ENCODE measurements at regions of chr2 and their contacts with region 1.

Region 1: DNA sequence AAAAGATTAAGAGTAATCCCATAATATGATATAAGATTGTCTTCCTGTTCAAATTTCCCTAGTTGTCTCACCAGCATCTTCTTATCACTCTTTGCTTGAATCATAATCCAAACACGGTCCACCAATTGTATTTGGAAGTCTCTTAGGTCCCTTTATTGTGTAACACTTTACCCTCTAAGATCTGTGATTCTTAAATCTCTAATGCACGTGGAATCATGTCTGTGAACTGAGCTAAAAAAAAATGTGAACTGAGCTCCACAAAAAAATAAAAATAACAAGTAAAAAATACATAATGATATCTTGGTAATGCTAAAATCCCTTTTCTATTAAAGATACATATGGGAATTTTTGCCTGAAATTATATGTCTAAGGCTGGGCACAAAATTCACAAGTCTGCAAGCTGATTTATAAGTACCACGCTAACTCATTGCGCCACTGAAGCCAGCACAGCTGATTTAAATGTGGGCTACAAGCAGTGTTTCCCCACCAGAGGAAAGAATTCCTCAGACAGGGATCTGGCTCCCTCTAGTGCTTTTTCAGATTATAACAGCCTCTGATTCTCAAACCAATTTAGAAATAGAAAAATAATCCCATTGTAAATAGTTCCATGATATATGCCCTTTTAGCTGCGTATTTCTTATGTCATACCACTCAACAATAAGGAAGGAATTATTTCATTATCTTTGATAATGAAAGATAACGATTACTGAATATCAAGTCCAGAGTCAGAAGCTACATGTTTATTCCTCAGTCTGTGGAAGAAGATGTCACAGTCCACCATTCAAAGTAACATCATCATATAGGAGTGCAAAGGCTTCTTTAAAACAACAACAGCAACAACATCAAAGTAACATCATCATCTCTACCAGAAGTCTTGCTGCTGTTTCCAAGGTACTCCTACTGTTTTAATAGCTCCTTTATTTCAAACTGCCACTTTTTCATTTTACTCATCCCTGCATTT is 22.9 kb downstream of the RBM43 start:
- DNase-seq: no peak
- H3K4me3 ChIP-seq: no peak overlapping the region
- H3K27ac ChIP-seq: no peak overlapping the region
- H3K4me1 ChIP-seq: no peaks in the 10 kb centered on the region
- H3K27me3 ChIP-seq: no peaks in the 10 kb centered on the region
- CTCF ChIP-seq: peak in 2 of 3 experiments; percentile 61 to 78; a peak in 3 of 4 replicates
- EP300 ChIP-seq: no peak
- POLR2A ChIP-seq: no peak
- RAD21 ChIP-seq: peak; percentile 99 to 100

Region 2: DNA sequence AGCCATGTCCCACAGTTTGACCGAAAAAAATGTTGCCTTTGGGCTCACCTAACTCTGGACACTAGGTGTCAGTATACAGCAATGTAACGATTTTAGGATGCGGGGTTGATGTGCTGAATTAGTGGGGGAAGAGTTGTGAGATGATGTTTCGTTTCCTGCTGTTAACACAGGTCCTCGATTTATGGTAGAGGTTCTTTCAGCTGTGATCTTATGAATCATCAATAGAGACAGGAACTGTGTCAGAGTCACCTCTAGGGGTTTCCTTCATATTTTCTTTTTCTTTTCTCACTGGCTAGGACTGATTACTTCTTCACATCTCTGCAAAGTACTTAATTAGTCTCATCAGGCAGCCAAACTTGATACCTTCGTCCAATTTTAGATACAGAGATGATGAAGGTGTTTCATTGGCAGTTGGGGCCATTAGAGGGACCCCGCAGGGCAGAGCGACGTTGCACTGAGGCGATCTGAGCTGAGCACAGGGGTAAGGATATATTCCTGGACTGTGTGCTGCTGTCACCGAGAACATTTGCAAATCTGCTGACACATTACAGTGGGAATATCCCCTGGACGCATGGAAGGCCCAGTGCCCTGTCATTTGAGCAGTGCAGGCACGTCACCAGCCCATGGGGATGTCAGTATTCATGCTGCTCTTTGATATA is 1641.0 kb before region 1 on chr2:
- CTCF ChIA-PET with region 1: interaction called, 24 read pairs
- POLR2A ChIA-PET with region 1: no interaction called
- DNase-seq: peak in 1 of 2 experiments; percentile 31
- H3K4me3 ChIP-seq: no peak overlapping the region
- H3K27ac ChIP-seq: no peak overlapping the region
- H3K4me1 ChIP-seq: no peaks in the 10 kb centered on the region
- H3K27me3 ChIP-seq: no peaks in the 10 kb centered on the region
- CTCF ChIP-seq: peak; percentile 5 to 90 (median 68)
- EP300 ChIP-seq: no peak
- POLR2A ChIP-seq: no peak
- RAD21 ChIP-seq: peak; percentile 97

Region 3: DNA sequence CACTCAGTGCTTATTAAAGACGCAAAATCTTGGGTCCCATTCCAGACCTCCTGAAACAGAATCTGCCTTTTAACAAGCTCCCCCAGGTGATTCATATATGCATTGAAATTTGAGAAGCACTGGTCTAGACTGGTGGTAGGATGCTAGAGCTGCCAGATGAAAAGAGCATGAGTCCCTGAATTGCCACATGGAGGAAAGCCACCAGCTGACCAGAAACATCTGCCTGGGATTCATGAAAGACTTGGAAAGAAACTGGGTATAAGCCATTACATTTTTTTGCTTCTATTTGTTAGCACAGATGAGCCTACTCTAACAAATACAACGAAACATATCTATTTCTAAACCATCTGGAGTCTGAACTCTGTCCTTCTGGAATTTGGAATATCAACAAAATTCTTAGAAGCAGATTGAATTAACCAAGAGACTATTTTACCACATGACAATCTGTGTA is 206.0 kb before region 1 on chr2:
- CTCF ChIA-PET with region 1: interaction called, 14 read pairs
- POLR2A ChIA-PET with region 1: no interaction called
- DNase-seq: no peak
- H3K4me3 ChIP-seq: no peak overlapping the region
- H3K27ac ChIP-seq: no peak overlapping the region
- H3K4me1 ChIP-seq: no peaks in the 10 kb centered on the region
- H3K27me3 ChIP-seq: no peaks in the 10 kb centered on the region
- CTCF ChIP-seq: no peak
- EP300 ChIP-seq: no peak
- POLR2A ChIP-seq: no peak
- RAD21 ChIP-seq: no peak

Region 4: GRCh38 chr2:151051574-151052220 is 187.1 kb before region 1 on chr2:
- CTCF ChIA-PET with region 1: interaction called, 11 read pairs
- POLR2A ChIA-PET with region 1: no interaction called
- DNase-seq: no peak
- H3K4me3 ChIP-seq: no peak overlapping the region
- H3K27ac ChIP-seq: no peak overlapping the region
- H3K4me1 ChIP-seq: no peaks in the 10 kb centered on the region
- H3K27me3 ChIP-seq: no peaks in the 10 kb centered on the region
- CTCF ChIP-seq: peak in 2 of 3 experiments; percentile 45 to 78; a peak in 2 of 4 replicates
- EP300 ChIP-seq: no peak
- POLR2A ChIP-seq: no peak
- RAD21 ChIP-seq: peak; percentile 70 to 78

Region 5: GRCh38 chr2:151176661-151177060 is 62.1 kb before region 1 on chr2:
- CTCF ChIA-PET with region 1: interaction called, 32 read pairs
- POLR2A ChIA-PET with region 1: no interaction called
- DNase-seq: no peak
- H3K4me3 ChIP-seq: no peak overlapping the region
- H3K27ac ChIP-seq: no peak overlapping the region
- H3K4me1 ChIP-seq: peaks cover 0 to 19% (median 10%) of the 10 kb centered on the region in 4 experiments; a peak in 5 of 7 replicates
- H3K27me3 ChIP-seq: 0 out of 7 replicates have a peak, but pooled peaks cover 0 to 2% (median 0%) of the 10 kb centered on the region in 4 experiments
- CTCF ChIP-seq: peak in 1 of 3 experiments; percentile 36; a peak in 1 of 4 replicates
- EP300 ChIP-seq: no peak
- POLR2A ChIP-seq: no peak
- RAD21 ChIP-seq: peak; percentile 48 to 56

Region 6: GRCh38 chr2:151191001-151191400 is 47.8 kb before region 1 on chr2:
- CTCF ChIA-PET with region 1: interaction called, 19 read pairs
- POLR2A ChIA-PET with region 1: no interaction called
- DNase-seq: no peak
- H3K4me3 ChIP-seq: no peak overlapping the region
- H3K27ac ChIP-seq: no peak overlapping the region
- H3K4me1 ChIP-seq: no peaks in the 10 kb centered on the region
- H3K27me3 ChIP-seq: no peaks in the 10 kb centered on the region
- CTCF ChIP-seq: no peak
- EP300 ChIP-seq: no peak
- POLR2A ChIP-seq: no peak
- RAD21 ChIP-seq: no peak

Region 7: GRCh38 chr2:151280271-151280670 is 41.5 kb after region 1 on chr2:
- CTCF ChIA-PET with region 1: no interaction called
- POLR2A ChIA-PET with region 1: no interaction called
- DNase-seq: no peak
- H3K4me3 ChIP-seq: no peak overlapping the region
- H3K27ac ChIP-seq: no peak overlapping the region
- H3K4me1 ChIP-seq: no peaks in the 10 kb centered on the region
- H3K27me3 ChIP-seq: no peaks in the 10 kb centered on the region
- CTCF ChIP-seq: no peak
- EP300 ChIP-seq: no peak
- POLR2A ChIP-seq: no peak
- RAD21 ChIP-seq: no peak

Region 8: DNA sequence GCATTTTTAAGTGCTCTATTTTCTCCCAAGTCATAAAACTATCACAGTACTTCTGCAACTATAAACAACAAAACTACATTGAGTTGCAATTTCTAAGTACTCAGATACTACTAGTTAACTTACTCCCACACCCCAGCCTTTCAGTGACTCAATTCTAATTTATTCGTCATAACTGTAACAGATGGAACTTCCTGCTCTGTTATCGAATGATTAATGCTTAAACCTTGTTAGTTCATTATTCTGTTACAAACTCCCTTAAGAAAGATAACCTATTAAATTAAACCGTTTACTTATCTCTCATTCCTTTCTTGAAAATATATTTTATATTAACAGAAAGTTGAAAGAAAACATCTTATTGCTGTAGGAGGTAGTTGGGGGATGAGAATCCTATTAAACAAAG is 135.6 kb after region 1 on chr2:
- CTCF ChIA-PET with region 1: no interaction called
- POLR2A ChIA-PET with region 1: no interaction called
- DNase-seq: no peak
- H3K4me3 ChIP-seq: no peak overlapping the region
- H3K27ac ChIP-seq: no peak overlapping the region
- H3K4me1 ChIP-seq: peaks cover 0 to 6% (median 0%) of the 10 kb centered on the region in 4 experiments; a peak in 1 of 7 replicates
- H3K27me3 ChIP-seq: no peaks in the 10 kb centered on the region
- CTCF ChIP-seq: no peak
- EP300 ChIP-seq: no peak
- POLR2A ChIP-seq: no peak
- RAD21 ChIP-seq: no peak

Measured in H1 (cell line).